Dendritic cell treated with granulocyte-macrophage colony-stimulating factor and Interleukin-4, amounts not matched to agents 40 ng/mL and 50 ng/mL, for 4 days (primary cell): ENCODE measurements at regions of chr1 and their contacts with region 1.

Region 1: GRCh38 chr1:2414083-2414958 is 2.0 kb upstream of the PEX10 start:
- H3K4me3 Mint-ChIP-seq: peak overlapping the region; percentile 81
- H3K27ac Mint-ChIP-seq: peak overlapping the region; percentile 63
- H3K4me1 Mint-ChIP-seq: peaks cover 44% of the 10 kb centered on the region
- H3K27me3 Mint-ChIP-seq: peaks cover 52% of the 10 kb centered on the region

Region 2: DNA sequence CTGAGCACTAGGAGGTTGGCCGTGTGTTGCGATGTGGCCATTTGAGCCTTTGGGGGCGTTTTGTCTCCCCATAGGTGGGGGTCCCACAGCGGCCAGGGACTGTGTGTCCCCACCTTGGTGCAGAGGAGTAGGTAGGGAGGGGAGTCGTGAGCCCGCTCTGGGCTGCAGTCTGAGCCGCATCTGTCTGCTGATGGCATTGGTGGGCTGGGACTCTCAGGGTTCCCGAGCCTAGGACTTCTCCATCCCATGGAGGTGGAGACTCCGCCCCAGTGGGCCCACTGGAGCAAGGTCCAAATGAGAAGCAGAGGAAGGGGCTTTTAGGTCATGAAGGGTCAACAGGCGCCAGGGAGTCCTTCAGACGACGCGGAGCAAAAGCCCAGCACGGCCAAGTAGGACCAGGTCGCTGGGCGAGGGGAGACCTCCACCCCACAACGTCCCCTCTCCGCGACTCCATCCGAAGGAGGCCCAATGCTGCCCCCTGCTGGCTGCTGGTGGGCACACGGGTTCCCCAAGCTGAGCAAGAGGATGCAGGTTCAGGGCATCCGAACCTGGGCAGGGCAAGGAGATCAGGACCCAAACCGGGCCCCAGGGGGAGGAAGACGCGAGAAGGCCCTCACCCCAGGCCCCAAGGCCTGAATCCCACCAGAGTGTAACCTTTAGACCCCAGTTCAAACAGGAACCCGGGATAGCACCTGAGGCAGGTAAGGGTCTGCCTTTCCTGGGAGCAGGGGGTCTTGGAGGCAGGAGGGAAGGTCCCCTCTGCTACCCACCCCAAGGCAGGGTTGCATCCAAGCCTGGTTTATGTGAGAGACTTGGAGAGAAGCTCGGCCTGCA is 372.2 kb after region 1 on chr1:
- intact Hi-C with region 1: loop called (anchors 2 kb)
- H3K4me3 Mint-ChIP-seq: no peak overlapping the region
- H3K27ac Mint-ChIP-seq: no peak overlapping the region
- H3K4me1 Mint-ChIP-seq: peaks cover 14% of the 10 kb centered on the region
- H3K27me3 Mint-ChIP-seq: peaks cover 50% of the 10 kb centered on the region